ENCODE measurements at regions of chr15 and their contacts with region 1.

Region 1: GRCh38 chr15:31302778-31303725 is 23.6 kb upstream of the KLF13 start:
- DNase-seq: peak; percentile 80
- ATAC-seq: peak; percentile 57

Region 2: GRCh38 chr15:31236184-31237042 is 66.6 kb before region 1 on chr15:
- intact Hi-C with region 1: loop called (anchors 5 kb)
- DNase-seq: peak; percentile 80
- ATAC-seq: peak; percentile 92

Region 3: DNA sequence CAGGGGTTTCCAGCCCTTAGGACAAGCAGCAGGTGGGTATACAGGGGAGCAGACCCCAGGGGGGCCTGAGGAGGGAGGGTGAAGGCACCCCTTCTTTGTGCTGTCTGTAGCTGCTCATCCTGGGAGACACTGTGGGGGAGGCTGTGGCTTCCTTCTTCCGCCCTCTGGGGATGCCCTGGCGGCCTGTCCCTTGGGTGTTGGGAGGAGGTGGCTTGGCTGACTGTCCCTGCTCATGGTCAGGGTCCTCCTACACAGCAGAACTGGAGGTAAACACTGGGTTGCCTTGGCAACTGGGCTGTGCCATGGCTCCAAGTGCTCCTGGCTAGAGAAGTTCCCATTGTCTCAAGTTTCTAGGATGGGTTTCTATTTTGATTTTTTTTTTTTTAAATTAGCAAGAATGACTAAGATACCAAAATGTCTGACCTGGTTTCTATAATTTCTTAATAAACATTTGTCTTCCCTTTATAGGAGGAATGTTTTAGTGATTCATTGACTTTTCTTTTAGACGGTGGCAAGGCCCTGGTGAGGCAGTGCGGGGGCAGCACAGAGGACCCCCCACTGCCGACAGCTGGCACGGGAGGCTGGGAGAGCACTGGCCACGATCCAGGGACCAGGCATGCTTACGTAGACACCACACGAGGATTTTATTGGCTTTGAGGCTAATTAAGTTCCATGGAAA is 36.0 kb after region 1 on chr15:
- intact Hi-C with region 1: no loop called
- DNase-seq: peak; percentile 88
- ATAC-seq: peak; percentile 65

Measured in Right ventricle myocardium inferior (tissue), 1 donor.